Activated CD8-positive, alpha-beta T cell treated with anti-CD3 and anti-CD28 coated beads, Interleukin-2, amount 10 ng/mL, durations not matched to agents 7 days and 5 days (primary cell): ENCODE measurements at regions of chr1 and their contacts with region 1.

Region 1: DNA sequence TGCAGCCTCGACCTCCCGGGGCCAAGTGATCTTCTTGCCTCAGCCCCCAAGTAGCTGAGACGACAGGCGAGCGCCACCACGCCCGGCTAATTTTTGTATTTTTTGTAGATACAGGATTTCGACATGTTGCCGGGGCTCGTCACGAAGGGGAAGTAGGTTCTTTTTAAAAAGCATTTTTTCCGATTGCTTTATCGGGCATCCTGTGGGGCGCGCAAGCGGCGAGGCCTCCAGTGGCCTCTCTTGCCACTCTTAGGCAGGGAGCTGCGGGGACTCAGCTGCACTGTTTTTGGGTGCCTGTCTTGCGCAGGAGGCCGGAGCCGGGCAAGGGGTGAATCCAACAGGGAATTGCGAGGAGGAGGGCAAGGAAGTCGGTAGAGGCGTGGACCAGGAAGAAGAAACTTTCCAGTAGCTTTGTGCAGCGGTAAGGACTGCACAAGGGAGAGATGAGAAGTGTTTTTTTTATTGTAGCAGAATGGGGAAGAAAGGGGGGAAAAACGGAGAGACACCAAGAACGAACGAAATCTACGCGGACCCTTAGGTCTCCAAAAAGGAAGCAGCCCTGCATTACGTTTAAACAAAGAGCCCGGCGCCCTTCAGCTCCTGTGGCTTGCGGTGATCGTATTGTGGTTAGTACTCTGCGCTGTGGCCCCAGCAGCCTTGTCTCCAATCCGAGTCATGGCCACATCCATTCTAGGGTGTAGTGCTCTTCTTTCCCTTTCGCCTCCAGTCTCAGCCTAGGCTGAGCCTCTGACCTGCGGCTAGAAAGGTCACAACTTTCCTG is 164.8 kb downstream of the PPIAL4G start:
- DNase-seq: peak; percentile 90
- ATAC-seq: peak; percentile 97
- H3K4me3 Mint-ChIP-seq: peak overlapping the region; percentile 79
- H3K27ac Mint-ChIP-seq: peak overlapping the region; percentile 84
- H3K4me1 Mint-ChIP-seq: peaks cover 41% of the 10 kb centered on the region
- H3K27me3 Mint-ChIP-seq: peaks cover 62% of the 10 kb centered on the region

Region 2: DNA sequence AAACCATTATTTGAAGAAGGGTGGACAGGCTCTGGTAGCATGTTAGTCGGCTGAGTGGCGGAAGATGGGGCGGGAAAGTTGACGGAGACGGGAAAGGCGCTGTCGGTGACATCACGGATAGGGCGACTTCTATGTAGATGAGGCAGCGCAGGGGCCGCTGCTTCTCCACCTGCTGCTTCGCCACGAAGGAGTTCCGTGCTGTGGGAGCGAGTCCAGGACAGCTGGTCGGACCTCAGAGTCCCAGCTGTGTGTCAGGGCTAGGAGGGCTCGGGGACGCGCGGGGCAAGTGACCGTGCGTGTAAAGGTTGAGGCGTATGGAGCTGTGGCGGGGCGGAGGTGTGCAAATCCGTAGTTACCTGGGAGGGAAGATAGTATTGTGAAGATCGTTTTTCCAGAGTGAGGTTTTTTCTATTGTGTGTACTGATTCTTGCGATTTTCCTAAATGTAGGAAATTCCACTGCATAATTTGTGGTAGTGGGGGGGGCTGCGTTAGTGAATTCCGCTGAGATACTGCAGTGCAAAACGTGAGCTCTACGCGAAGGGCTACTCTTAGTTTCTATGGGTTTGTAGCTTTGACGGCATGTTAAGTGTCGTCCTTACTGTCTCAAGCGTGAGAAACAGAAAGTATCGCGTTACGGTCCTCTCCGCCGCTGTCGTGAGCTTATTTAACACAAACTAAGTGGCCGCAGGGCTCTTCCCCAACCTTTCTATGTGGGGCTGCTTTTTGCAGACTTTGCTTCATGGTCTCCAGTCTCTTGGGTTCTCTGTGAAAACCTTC is 55.0 kb before region 1 on chr1:
- CTCF ChIA-PET with region 1: no interaction called
- POLR2A ChIA-PET with region 1: interaction called, 15 read pairs
- DNase-seq: peak; percentile 73
- ATAC-seq: peak; percentile 91
- H3K4me3 Mint-ChIP-seq: peak overlapping the region; percentile 83
- H3K27ac Mint-ChIP-seq: peak overlapping the region; percentile 84
- H3K4me1 Mint-ChIP-seq: peaks cover 14% of the 10 kb centered on the region
- H3K27me3 Mint-ChIP-seq: peaks cover 39% of the 10 kb centered on the region